Calu3 (cell line): ENCODE measurements at regions of chr2 and their contacts with region 1.

Region 1: DNA sequence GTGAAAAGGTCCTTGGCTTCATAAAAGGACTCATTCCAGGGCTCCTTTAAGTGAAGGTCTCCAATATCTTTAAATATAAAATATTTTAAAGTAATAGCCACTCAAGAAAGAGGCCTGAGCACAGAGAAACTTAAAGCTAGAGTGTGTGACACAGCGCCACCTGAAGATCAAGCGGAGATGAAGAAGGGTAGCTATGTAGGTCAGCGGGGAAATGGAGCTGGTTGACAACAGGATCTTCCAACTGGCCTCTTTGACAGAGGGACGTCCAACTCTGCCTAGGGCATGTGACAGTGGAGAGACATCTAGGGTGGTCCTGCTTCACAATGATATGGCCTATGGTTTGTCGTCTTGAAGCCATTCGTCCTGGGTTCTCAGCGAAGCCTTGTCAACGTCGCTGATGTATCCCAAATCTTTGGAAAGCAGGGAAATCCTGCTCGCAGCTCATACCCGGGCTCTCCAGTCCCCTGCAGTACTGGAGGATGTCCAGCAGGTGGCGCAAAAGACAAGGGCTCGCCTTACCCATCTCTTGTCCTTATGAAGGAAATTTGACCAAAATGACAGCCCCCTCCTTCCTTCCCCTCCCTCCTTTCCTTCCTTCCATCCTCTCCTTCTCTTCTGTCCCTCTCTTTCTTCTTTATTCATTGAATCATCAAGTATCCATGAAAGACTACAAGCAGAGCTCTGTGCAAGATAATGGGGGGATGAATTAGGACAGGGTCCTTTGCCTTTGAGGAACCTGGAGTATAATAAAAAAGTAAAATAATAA is 59.6 kb downstream of the LONRF2 start:
- DNase-seq: peak; percentile 77
- H3K4me3 Mint-ChIP-seq: no peak overlapping the region
- H3K27ac Mint-ChIP-seq: no peak overlapping the region
- H3K4me1 Mint-ChIP-seq: peaks cover 4% of the 10 kb centered on the region
- H3K27me3 Mint-ChIP-seq: peaks cover 12% of the 10 kb centered on the region
- CTCF ChIP-seq: peak; percentile 97

Region 2: GRCh38 chr2:99725820-99726219 is 536.9 kb before region 1 on chr2:
- CTCF ChIA-PET with region 1: no interaction called
- intact Hi-C with region 1: loop called (anchors 5 kb)
- DNase-seq: no peak
- H3K4me3 Mint-ChIP-seq: no peak overlapping the region
- H3K27ac Mint-ChIP-seq: no peak overlapping the region
- H3K4me1 Mint-ChIP-seq: no peaks in the 10 kb centered on the region
- H3K27me3 Mint-ChIP-seq: peaks cover 14% of the 10 kb centered on the region
- CTCF ChIP-seq: no peak

Region 3: DNA sequence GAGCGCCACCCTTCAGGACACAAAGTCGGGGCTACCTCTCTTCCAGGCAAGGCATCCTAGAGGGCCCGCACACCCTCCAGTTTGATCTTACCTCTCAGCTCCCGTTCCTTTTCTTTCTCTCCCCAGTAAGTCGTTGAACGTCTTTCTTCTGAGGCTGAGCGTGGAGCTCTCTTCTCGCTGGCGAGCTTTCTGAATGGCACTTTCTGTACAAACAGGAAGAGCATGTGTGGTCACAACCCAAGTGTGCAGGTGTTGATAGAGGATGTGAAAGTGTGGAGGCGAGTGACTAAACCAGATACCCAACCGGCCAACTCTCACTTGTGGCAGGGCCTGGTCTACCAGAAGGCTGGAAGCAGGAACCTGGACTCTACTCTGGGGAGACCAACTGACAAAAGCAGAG is 120.3 kb before region 1 on chr2 and contains the start of gene AFF3:
- CTCF ChIA-PET with region 1: no interaction called
- intact Hi-C with region 1: no loop called
- DNase-seq: no peak
- H3K4me3 Mint-ChIP-seq: no peak within 1 kb of the TSS
- H3K27ac Mint-ChIP-seq: no peak within 1 kb of the TSS
- H3K4me1 Mint-ChIP-seq: no peaks in the 10 kb centered on the region
- H3K27me3 Mint-ChIP-seq: peaks cover 52% of the 10 kb centered on the region
- CTCF ChIP-seq: no peak
- total RNA-seq, gene AFF3: not detected in 2 replicates

Region 4: DNA sequence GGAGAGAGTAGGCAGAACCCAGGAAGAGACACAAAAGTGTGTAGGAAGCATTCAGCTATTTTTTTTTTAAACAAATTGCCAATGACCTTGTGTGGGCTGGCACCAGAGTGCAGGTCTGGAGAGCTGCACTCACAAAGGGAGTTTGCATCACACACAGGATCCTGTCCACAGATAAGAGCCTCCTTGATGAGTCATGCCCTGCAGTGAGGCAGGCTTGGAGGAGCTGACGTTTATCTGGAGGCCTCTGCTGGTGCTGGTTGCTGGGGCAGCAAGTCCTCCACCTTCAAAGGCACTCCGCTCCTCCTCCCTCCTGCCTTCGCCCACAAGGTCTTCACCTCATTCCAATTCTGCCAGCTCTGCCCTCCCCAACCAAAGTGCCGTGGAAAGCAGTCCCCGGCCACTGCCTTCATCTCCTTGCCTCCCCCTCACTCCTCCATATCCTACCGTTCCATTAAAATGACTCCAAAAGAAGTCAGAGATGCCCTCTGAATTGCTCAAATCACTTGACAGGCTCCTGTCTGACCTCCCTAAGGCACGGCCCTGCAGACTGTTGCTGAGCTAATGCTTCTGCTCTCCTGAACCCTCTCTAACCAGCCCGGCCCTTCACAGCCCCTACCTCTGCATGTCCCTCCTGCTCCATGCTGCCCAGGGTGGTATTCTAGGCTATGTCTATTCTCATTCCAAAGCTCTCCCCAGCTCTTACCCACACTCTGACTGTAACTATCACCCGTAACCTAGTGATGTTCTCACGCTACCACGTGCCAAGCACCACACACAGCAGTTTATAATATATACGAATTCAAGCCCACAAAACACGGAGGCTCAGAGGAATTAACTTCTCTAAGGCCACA is 28.6 kb after region 1 on chr2:
- CTCF ChIA-PET with region 1: interaction called, 15 read pairs
- intact Hi-C with region 1: no loop called
- DNase-seq: peak; percentile 85
- H3K4me3 Mint-ChIP-seq: no peak overlapping the region
- H3K27ac Mint-ChIP-seq: no peak overlapping the region
- H3K4me1 Mint-ChIP-seq: peaks cover 5% of the 10 kb centered on the region
- H3K27me3 Mint-ChIP-seq: no peaks in the 10 kb centered on the region
- CTCF ChIP-seq: no peak

Region 5: DNA sequence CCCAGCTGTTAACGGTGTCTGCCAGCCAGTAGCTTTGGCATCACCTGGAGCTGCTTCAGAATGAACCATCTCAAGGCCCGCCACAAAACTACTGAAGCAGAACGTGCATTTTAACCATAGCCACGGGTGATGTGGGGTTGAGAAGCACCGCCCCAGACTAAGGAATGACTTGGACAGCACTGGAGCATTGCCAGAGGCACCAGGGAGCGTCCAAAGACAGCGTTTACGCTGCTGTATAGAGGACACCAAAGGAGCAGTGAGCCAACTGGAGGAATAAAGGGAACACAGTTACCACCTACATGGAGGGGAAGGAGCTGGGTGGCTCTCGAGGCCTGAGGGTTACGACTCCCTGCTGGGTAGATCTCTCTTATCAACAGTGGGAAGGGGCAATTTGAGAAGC is 88.0 kb after region 1 on chr2:
- CTCF ChIA-PET with region 1: interaction called, 10 read pairs
- intact Hi-C with region 1: no loop called
- DNase-seq: no peak
- H3K4me3 Mint-ChIP-seq: no peak overlapping the region
- H3K27ac Mint-ChIP-seq: no peak overlapping the region
- H3K4me1 Mint-ChIP-seq: peaks cover 36% of the 10 kb centered on the region
- H3K27me3 Mint-ChIP-seq: no peaks in the 10 kb centered on the region
- CTCF ChIP-seq: no peak